WTC11 (cell line): ENCODE measurements at regions of chr16 and their contacts with region 1.

Region 1: DNA sequence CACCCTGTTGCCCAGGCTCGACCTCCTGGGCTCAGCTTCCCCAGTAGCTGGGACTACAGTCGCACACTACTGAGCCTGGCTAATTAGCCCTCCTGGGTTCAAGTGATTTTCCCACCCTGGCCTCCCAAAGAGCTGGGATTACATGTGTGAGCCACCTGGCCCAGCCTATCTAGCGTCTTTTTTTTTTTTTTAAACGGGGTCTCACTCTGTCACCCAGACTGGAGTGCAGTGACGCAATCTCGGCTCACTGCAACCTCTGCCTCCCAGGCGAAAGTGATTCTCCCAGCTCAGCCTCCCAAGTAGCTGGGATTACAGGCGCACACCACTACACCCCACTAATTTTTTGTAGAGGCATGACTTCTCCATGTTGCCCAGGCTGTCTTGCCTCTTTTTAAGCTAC is 33.3 kb downstream of the GLG1 start:
- DNase-seq: no peak
- ATAC-seq: no peak
- H3K4me3 Mint-ChIP-seq: no peak overlapping the region
- H3K27ac Mint-ChIP-seq: peak overlapping the region; percentile 12; the same call in 1 of the 2 replicates
- H3K4me1 Mint-ChIP-seq: peaks cover 21% of the 10 kb centered on the region
- H3K27me3 Mint-ChIP-seq: no peaks in the 10 kb centered on the region
- CTCF ChIP-seq: no peak

Region 2: DNA sequence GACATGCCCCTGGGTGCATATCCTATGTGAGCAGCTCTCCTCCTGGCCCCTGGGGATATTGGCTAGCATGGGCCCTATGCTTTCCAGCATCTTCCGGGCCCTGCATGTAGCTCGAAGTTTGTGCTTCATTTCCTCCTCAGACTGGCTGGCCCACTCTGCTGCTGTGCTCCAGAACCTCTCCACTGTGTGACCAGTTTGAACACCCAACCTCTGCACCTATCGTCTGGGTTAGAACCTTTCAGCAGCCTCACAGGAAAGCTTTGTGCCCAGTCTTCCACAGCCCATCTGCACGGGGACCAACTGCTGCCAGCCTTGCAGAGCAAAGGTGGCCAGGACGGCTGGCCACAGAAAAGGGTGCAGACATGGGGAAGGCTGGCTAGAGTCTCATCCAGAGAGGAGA is 142.1 kb before region 1 on chr16:
- CTCF ChIA-PET with region 1: no interaction called
- POLR2A ChIA-PET with region 1: interaction called, 10 read pairs
- DNase-seq: no peak
- ATAC-seq: no peak
- H3K4me3 Mint-ChIP-seq: no peak overlapping the region
- H3K27ac Mint-ChIP-seq: peak overlapping the region; percentile 64; the same call in 1 of the 2 replicates
- H3K4me1 Mint-ChIP-seq: peaks cover 14% of the 10 kb centered on the region
- H3K27me3 Mint-ChIP-seq: no peaks in the 10 kb centered on the region
- CTCF ChIP-seq: no peak